CD8-positive, alpha-beta T cell (primary cell): ENCODE measurements at regions of chr6 and their contacts with region 1.

Region 1: DNA sequence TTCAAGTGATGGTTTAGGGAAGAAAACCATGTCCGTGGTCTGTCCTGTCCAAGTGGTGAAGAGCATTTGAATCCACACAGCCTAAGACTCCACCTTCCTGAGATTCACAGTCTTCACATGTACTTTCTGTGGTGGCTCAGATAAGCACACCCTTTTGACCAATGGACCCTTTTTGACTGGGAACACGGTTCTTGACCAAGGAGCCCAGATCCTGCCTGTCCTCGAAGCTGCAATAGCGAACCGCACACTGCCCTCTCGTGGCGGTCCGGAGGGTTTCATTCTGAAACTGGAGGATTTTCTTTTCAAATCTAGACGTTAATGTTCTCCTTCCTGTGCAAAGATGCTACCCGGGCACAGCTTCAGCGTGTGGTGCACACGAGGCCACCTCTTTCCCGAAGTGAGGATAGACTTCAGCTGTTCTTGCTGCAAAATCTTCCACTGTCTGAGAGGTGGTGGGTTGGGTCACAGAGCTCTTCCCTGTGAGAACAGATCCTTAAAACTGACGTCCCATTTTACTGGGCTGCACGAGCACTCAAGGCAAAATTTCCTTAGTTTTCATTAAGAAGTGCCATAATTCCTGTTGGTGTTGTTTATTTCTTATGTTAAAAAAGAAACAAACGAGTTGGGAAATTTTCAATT is 90.5 kb downstream of the SYNJ2 start:
- DNase-seq: peak; percentile 35 to 81 (median 62)
- ATAC-seq: peak; percentile 80
- H3K4me3 ChIP-seq: no peak overlapping the region
- H3K4me3 Mint-ChIP-seq: no peak overlapping the region
- H3K27ac ChIP-seq: no peak overlapping the region
- H3K27ac Mint-ChIP-seq: no peak overlapping the region
- H3K4me1 ChIP-seq: peaks cover 8% of the 10 kb centered on the region
- H3K4me1 Mint-ChIP-seq: peaks cover 6% of the 10 kb centered on the region
- H3K27me3 ChIP-seq: no peaks in the 10 kb centered on the region
- H3K27me3 Mint-ChIP-seq: no peaks in the 10 kb centered on the region
- CTCF ChIP-seq: peak; percentile 80

Region 2: GRCh38 chr6:157937916-157938315 is 134.3 kb before region 1 on chr6:
- CTCF ChIA-PET with region 1: interaction called, 9 read pairs
- POLR2A ChIA-PET with region 1: no interaction called
- intact Hi-C with region 1: loop called in 1 of 2 experiments (anchors 10 kb)
- DNase-seq: no peak
- ATAC-seq: no peak
- H3K4me3 ChIP-seq: no peak overlapping the region
- H3K4me3 Mint-ChIP-seq: no peak overlapping the region
- H3K27ac ChIP-seq: no peak overlapping the region
- H3K27ac Mint-ChIP-seq: no peak overlapping the region
- H3K4me1 ChIP-seq: no peaks in the 10 kb centered on the region
- H3K4me1 Mint-ChIP-seq: no peaks in the 10 kb centered on the region
- H3K27me3 ChIP-seq: no peaks in the 10 kb centered on the region
- H3K27me3 Mint-ChIP-seq: no peaks in the 10 kb centered on the region
- CTCF ChIP-seq: no peak

Region 3: DNA sequence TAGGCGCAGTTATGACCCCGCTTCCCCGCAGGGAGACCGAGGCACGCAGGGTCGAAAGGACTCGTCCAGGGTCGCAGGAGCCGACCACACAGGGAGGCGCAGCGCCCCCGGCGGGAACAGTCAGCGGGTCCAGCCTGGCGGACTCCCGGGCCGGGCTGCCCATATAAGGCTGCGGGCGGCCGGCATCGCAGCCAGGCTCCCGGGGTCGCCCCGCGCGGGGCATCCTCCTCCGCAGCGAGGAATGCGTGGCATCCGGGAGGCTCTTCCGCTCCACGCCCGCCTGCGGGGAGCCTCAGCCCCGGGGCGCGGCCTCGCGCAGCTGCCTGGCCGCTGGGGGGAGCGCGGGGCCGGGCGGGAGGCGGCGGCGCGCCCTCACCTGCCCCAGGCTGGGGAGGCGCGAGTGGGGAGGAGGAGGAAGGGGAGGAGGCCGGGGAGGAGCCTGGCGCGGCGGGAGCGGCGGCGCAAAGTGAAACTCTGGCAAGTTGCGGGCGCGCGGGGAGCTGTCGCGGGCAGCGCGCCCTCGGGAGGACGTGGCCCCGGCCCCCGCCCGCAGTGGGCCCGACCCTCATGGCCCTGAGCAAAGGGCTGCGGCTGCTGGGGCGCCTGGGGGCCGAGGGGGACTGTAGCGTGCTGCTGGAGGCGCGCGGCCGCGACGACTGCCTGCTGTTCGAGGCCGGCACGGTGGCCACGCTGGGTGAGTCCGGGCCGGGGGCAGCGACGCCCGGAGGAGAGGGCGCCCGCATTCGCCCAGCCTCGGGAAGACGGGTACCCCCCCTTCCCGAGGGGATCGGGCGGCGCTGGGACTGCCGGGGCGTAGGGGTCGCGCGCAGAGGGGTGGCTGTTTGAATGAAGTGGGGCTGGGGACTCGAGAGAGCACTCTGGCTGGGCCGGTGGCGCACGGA is 90.6 kb before region 1 on chr6 and contains the start of gene SYNJ2:
- CTCF ChIA-PET with region 1: interaction called, 17 read pairs
- POLR2A ChIA-PET with region 1: no interaction called
- intact Hi-C with region 1: loop called (anchors 1 kb)
- DNase-seq: peak; percentile 66 to 90 (median 82)
- ATAC-seq: peak; percentile 91
- H3K4me3 ChIP-seq: peak within 1 kb of the TSS; percentile 69 to 87
- H3K4me3 Mint-ChIP-seq: peak within 1 kb of the TSS; percentile 89
- H3K27ac ChIP-seq: peak within 1 kb of the TSS; percentile 43 to 55
- H3K27ac Mint-ChIP-seq: peak within 1 kb of the TSS; percentile 55
- H3K4me1 ChIP-seq: peaks cover 49% of the 10 kb centered on the region
- H3K4me1 Mint-ChIP-seq: peaks cover 47% of the 10 kb centered on the region
- H3K27me3 ChIP-seq: no peaks in the 10 kb centered on the region
- H3K27me3 Mint-ChIP-seq: no peaks in the 10 kb centered on the region
- CTCF ChIP-seq: peak; percentile 38
- total RNA-seq, gene SYNJ2: 28.4 to 29.5 TPM

Region 4: GRCh38 chr6:157989541-157990289 is 82.5 kb before region 1 on chr6:
- CTCF ChIA-PET with region 1: interaction called, 11 read pairs
- POLR2A ChIA-PET with region 1: no interaction called
- intact Hi-C with region 1: no loop called
- DNase-seq: no peak
- ATAC-seq: peak; percentile 15
- H3K4me3 ChIP-seq: peak overlapping the region in 1 of 2 experiments; percentile 38
- H3K4me3 Mint-ChIP-seq: peak overlapping the region; percentile 81
- H3K27ac ChIP-seq: peak overlapping the region; percentile 9 to 20
- H3K27ac Mint-ChIP-seq: peak overlapping the region; percentile 88
- H3K4me1 ChIP-seq: peaks cover 47% of the 10 kb centered on the region
- H3K4me1 Mint-ChIP-seq: peaks cover 53% of the 10 kb centered on the region
- H3K27me3 ChIP-seq: no peaks in the 10 kb centered on the region
- H3K27me3 Mint-ChIP-seq: no peaks in the 10 kb centered on the region
- CTCF ChIP-seq: no peak

Region 5: DNA sequence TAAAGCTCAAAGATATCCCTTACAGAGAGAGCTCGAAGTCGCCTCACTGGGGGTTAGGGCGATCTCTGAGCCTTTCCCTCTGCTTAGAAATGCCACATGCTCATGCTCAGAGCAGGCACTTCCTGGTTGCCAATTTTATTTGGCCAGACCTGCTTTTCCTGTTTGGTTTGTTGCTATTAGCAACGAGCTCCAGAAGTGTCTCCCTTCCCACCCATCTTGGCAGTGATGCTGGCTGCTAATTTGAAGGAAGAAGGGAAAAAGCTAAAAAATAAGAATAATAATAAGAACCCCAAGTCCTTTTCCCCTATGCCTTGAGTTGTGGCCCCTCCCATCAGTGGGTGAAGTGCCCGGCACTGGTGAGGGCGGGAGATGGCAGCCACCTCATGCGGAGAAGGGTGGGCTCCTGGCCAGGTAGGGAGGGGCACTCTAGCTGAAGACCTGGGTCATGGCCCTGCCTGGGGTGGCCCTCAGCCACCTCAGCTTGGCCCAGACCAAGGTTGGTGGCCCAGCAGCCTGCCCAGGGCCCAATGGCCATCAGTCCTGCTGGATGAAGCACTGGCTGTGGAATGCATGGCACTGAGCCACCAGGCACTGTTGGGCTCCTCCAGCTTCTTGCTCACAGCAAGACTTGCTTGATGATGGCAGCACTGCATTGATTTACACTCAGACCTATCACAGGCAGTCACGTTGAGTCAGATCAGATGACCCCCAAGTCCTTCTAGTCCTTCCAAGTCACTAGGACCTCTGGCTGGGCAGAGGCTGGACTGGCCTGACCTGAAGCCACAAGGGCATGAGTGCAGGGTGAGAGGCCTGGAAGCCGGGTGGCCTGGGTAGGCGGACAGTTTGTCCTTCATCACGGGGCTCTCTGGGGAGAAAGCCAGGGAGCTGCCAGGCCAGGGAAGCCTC is 11.5 kb before region 1 on chr6:
- CTCF ChIA-PET with region 1: interaction called, 24 read pairs
- POLR2A ChIA-PET with region 1: interaction called, 3 read pairs
- intact Hi-C with region 1: no loop called
- DNase-seq: peak in 1 of 9 experiments; percentile 31
- ATAC-seq: no peak
- H3K4me3 ChIP-seq: no peak overlapping the region
- H3K4me3 Mint-ChIP-seq: no peak overlapping the region
- H3K27ac ChIP-seq: no peak overlapping the region
- H3K27ac Mint-ChIP-seq: peak overlapping the region; percentile 55
- H3K4me1 ChIP-seq: peaks cover 27% of the 10 kb centered on the region
- H3K4me1 Mint-ChIP-seq: peaks cover 17% of the 10 kb centered on the region
- H3K27me3 ChIP-seq: no peaks in the 10 kb centered on the region
- H3K27me3 Mint-ChIP-seq: no peaks in the 10 kb centered on the region
- CTCF ChIP-seq: no peak